Activated CD4-positive, alpha-beta memory T cell treated with anti-CD3 and anti-CD28 coated beads, Interleukin-2, amount 10 ng/mL, durations not matched to agents 7 days and 5 days (primary cell): ENCODE measurements at regions of chr1 and their contacts with region 1.

Region 1: DNA sequence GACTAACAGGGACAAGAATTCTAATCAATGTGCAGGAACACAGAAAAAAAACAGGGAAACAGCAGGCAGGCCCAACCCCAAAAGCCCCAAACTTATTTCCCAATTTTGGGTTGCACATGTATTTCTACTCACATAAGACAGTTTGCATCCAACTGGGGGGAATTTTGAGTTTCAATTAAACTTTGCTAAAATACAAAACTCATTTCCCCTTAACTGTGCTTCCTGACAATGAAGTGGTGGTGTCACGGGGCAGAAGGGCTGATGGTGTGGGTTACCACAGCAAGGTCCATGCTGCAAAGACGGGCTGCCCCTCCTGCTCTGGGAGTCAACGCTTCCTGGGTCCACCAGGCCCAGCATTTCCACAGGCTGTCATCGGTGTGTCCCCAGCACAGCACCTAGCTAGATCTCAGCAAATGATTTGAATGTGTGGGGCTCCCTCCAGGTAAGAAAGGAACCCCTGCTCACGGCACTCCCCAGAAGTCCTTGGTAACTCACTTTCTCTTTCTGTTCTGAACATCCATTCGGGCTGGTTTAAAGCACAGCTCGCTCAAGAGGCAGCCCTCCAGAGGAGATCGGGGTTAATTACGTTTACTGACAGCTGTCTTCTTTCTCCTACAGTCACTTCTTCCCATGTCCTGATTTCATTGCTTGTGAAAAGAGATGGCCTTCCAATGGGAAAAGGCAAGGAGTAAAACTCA is 27.4 kb downstream of the HIVEP3 start:
- DNase-seq: peak; percentile 70
- H3K4me3 Mint-ChIP-seq: peak overlapping the region; percentile 79
- H3K27ac Mint-ChIP-seq: peak overlapping the region; percentile 94
- H3K4me1 Mint-ChIP-seq: peaks cover 75% of the 10 kb centered on the region
- H3K27me3 Mint-ChIP-seq: no peaks in the 10 kb centered on the region

Region 2: DNA sequence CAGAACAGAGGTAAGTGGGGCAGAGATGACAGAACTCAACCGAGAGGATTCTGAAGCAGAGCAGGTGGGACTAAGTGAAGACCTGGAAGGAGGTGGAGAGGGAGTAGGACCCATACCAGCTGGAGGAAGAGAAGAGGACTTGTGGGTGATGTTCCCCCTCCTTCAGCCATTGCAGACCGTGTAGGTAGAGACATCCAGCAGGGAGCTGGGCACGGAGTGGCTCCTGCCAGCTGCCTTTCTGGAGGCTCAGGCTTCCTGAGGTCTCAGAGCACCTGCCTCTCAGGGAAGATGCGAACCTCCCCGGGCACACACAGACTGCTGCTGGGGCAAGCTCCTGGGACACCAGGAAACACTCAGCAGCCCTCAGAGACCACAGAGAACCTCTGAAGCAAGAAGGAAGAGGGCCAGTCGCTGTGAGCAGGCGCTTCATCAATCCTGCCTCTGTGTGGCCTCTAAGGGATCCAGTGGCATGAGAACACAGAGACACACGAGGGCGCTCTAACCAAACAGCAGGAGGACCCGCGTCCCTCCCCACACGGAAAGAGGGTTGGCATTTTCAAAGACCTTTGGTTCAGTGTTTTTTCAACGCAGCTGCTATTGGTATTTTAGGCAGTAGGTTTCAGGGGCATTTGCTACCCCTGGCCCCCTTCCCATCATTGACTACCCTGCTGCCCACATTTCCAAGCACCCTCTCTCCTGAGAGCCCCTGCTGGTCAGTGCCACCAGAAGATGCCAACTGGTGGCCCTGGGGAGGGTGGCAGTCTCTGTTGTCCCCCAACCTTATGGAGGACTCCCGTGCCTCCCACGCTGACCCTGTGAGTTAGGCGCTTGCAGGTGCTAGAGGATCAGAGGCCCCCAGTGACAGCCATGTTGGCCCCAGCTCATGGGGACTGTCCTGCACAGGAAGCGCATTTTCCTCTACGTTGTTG is 317.3 kb before region 1 on chr1:
- CTCF ChIA-PET with region 1: interaction called, 22 read pairs
- POLR2A ChIA-PET with region 1: interaction called, 5 read pairs
- DNase-seq: peak; percentile 88
- H3K4me3 Mint-ChIP-seq: no peak overlapping the region
- H3K27ac Mint-ChIP-seq: peak overlapping the region; percentile 12
- H3K4me1 Mint-ChIP-seq: peaks cover 24% of the 10 kb centered on the region
- H3K27me3 Mint-ChIP-seq: no peaks in the 10 kb centered on the region

Region 3: GRCh38 chr1:41765152-41765551 is 126.2 kb before region 1 on chr1:
- CTCF ChIA-PET with region 1: no interaction called
- POLR2A ChIA-PET with region 1: no interaction called
- DNase-seq: no peak
- H3K4me3 Mint-ChIP-seq: no peak overlapping the region
- H3K27ac Mint-ChIP-seq: no peak overlapping the region
- H3K4me1 Mint-ChIP-seq: peaks cover 3% of the 10 kb centered on the region
- H3K27me3 Mint-ChIP-seq: peaks cover 3% of the 10 kb centered on the region

Region 4: DNA sequence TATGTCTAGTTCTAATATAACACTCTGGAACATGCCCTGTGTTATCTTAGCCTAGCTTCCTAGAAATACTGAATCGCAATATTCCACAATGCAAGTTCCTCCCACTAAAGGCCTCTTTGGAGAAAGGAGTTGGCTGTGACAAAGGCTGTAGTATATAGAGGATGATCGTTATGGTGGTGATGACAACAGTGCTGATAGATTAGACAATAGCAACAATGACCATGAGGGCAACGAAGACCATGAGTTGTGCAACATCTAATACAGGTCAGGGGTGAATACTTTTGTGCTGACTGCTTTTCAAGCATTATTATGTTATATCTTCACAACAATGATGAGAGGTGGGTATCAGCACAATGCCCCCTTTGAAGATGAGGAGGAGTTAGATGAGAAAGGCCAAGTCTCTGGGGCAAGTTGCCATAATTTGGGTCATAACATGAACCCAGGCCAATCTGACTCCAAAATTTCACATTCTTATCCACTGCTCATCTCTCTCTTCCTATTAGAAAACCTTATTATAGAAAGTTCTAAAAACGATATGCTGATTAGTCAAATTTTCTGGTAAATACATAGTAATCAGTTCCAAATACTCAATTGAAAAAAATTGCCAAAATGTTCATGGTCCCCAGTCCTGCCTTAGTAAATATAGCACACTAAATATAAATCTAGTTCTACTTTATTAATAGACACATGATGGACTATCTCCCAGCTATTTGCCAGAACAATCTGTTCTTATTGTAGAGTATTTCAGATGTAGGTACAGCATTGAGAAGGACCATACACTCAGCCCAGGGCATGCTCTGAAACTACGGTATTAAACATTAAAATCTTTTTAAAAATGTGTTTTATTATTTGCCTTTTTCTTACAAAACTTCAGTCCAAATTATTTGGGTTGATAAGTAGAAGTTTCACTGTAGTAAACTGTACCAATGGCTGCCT is 10.1 kb before region 1 on chr1:
- CTCF ChIA-PET with region 1: no interaction called
- POLR2A ChIA-PET with region 1: no interaction called
- DNase-seq: no peak
- H3K4me3 Mint-ChIP-seq: no peak overlapping the region
- H3K27ac Mint-ChIP-seq: no peak overlapping the region
- H3K4me1 Mint-ChIP-seq: peaks cover 25% of the 10 kb centered on the region
- H3K27me3 Mint-ChIP-seq: no peaks in the 10 kb centered on the region

Region 5: DNA sequence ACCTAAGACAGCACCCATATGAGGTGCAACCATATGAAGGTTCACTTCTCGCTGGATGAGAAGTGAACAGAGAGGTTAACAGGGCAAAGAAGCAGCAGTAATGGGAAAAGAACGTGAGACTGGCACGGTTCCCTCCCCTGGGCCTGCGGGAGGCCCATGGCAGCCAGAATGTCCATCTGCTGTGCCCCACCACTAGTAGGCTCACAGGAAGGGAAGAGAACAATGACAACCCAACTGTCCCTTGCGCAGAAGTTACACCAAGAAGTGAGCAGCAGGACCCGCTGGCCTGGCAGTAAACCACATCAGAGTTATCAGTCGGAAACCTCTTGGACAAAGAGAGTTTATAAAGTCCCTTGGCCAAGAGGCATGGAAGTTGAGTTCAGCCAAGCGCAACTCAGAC is 16.1 kb after region 1 on chr1:
- CTCF ChIA-PET with region 1: interaction called, 14 read pairs
- POLR2A ChIA-PET with region 1: interaction called, 231 read pairs
- DNase-seq: no peak
- H3K4me3 Mint-ChIP-seq: no peak overlapping the region
- H3K27ac Mint-ChIP-seq: no peak overlapping the region
- H3K4me1 Mint-ChIP-seq: peaks cover 52% of the 10 kb centered on the region
- H3K27me3 Mint-ChIP-seq: no peaks in the 10 kb centered on the region